MCF 10A (cell line): ENCODE measurements at regions of chr2 and their contacts with region 1.

Region 1: DNA sequence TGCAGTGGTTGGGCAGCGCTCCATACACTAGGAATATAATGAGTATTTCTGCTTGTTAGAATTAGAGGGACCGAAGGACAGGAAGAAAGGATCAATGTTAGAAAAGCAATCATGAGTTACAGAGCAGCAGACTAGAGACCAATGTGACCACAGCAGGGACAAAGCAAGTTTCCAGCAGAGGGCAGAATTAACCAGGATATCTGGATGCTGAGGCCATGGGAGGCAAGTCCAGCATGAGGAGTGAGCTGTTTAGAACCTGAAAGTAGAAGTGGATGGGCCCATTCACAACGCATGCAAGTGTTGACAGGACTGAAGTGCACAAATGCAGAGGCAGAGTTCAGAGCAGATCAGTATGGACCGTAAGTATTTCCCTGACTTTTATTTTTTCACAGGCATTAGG is 910.4 kb upstream of the GYPC start:
- DNase-seq: peak; percentile 67
- H3K4me3 Mint-ChIP-seq: no peak overlapping the region
- H3K27ac Mint-ChIP-seq: no peak overlapping the region
- H3K4me1 Mint-ChIP-seq: peaks cover 11% of the 10 kb centered on the region
- H3K27me3 Mint-ChIP-seq: no peaks in the 10 kb centered on the region
- CTCF ChIP-seq: peak; percentile 55

Region 2: DNA sequence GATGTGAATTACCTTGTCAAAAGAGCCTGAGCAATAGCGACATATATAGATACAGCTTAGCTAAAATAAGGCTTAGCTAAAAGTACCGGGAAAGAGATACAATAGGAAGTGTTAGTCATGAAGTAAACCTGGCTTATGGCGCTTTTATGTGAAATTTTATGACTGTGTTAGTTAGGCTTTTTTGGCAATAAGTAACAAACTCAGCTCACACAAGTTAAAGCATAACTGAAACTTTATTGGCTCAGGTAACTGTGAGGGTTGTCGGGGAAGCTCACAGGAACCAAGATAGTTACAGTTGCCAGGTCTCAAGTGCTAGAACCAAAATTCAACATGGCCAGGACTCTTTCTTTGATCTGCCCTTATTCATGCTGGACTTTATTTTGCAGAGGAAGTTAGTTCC is 14.6 kb before region 1 on chr2:
- CTCF ChIA-PET with region 1: interaction called, 10 read pairs
- POLR2A ChIA-PET with region 1: interaction called, 4 read pairs
- intact Hi-C with region 1: no loop called
- DNase-seq: no peak
- H3K4me3 Mint-ChIP-seq: no peak overlapping the region
- H3K27ac Mint-ChIP-seq: no peak overlapping the region
- H3K4me1 Mint-ChIP-seq: no peaks in the 10 kb centered on the region
- H3K27me3 Mint-ChIP-seq: no peaks in the 10 kb centered on the region
- CTCF ChIP-seq: no peak

Region 3: GRCh38 chr2:126244937-126245336 is 499.4 kb after region 1 on chr2:
- CTCF ChIA-PET with region 1: interaction called, 7 read pairs
- POLR2A ChIA-PET with region 1: no interaction called
- intact Hi-C with region 1: loop called (anchors 1 kb)
- DNase-seq: peak; percentile 63
- H3K4me3 Mint-ChIP-seq: no peak overlapping the region
- H3K27ac Mint-ChIP-seq: no peak overlapping the region
- H3K4me1 Mint-ChIP-seq: no peaks in the 10 kb centered on the region
- H3K27me3 Mint-ChIP-seq: peaks cover 10% of the 10 kb centered on the region
- CTCF ChIP-seq: peak; percentile 39

Region 4: DNA sequence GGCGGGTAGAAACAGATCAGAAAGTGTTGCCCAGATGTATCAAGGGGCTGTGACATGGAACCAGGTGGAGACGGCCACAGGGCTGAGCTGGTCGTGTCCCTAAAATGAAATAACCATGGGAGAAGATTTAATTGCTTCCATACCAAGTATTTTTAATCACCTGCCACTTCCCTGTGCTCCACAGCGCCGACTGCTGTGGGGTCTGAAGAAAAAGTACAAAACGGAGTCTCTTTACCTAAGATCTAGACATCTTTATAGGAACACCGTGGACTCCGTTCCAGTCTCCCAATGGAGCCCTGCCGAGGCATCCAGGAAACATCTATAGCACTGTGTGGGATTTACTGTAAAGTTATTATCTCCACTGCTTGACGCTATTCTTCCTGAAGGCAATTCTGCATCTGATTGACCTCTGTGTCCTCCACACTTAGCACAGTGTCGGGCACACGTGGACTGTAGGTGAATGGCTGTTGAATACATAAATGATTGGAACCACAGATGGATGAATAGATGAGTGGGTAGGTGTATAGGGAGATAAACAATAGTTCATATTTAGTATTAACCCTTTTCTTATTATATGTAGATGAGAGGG is 888.9 kb after region 1 on chr2:
- CTCF ChIA-PET with region 1: interaction called, 9 read pairs
- POLR2A ChIA-PET with region 1: no interaction called
- intact Hi-C with region 1: loop called (anchors 10 kb)
- DNase-seq: peak; percentile 22
- H3K4me3 Mint-ChIP-seq: no peak overlapping the region
- H3K27ac Mint-ChIP-seq: no peak overlapping the region
- H3K4me1 Mint-ChIP-seq: peaks cover 5% of the 10 kb centered on the region
- H3K27me3 Mint-ChIP-seq: peaks cover 62% of the 10 kb centered on the region
- CTCF ChIP-seq: peak; percentile 48

Region 5: DNA sequence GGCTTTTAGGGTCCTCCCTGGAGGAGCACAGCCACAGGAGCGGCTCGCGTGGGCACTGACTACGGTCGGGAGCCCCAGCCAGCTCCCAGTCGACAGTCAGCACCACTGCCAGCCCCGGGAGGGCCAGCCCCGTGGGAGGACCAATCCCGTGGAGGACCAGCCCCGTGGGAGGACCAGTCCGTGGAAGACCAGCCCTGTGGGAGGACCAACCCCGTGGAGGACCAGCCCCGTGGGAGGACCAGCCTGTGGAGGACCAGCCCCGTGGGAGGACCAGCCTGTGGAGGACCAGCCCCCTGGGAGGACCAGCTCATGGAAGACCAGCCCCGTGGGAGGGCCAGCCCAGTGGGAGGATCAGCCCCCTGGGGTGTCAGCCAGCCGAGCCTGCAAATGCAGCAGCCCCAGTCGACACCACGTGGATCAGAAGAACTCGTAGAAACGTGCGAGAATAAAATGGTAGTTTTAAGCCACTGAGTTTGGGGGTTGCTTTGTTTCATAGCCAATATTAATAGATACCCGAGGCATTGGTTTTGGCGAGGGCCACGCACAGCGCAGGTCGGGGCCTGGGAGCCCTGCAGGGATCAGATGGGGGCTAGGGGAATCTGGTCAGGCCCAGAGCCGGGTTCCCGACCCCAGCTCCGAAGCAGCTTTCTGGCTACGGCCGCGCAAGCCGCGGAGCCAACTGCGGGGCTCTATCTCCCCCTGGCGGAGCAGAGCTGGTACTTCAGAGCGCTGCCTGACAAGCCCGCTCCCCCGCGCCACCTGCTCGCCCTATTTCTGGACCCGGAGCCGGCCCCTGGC is 1226.2 kb after region 1 on chr2:
- CTCF ChIA-PET with region 1: interaction called, 32 read pairs
- POLR2A ChIA-PET with region 1: no interaction called
- intact Hi-C with region 1: loop called (anchors 1 kb)
- DNase-seq: peak; percentile 65
- H3K4me3 Mint-ChIP-seq: peak overlapping the region; percentile 64
- H3K27ac Mint-ChIP-seq: no peak overlapping the region
- H3K4me1 Mint-ChIP-seq: peaks cover 6% of the 10 kb centered on the region
- H3K27me3 Mint-ChIP-seq: peaks cover 45% of the 10 kb centered on the region
- CTCF ChIP-seq: peak; percentile 95